PC-9 (cell line): ENCODE measurements at regions of chr19 and their contacts with region 1.

Region 1: GRCh38 chr19:15841875-15842569 is 26.6 kb upstream of the OR10H1 start:
- DNase-seq: no peak
- H3K4me3 ChIP-seq: no peak overlapping the region
- H3K27ac ChIP-seq: no peak overlapping the region
- H3K4me1 ChIP-seq: peaks cover 11% of the 10 kb centered on the region
- H3K27me3 ChIP-seq: no peaks in the 10 kb centered on the region
- CTCF ChIP-seq: peak; percentile 59

Region 2: DNA sequence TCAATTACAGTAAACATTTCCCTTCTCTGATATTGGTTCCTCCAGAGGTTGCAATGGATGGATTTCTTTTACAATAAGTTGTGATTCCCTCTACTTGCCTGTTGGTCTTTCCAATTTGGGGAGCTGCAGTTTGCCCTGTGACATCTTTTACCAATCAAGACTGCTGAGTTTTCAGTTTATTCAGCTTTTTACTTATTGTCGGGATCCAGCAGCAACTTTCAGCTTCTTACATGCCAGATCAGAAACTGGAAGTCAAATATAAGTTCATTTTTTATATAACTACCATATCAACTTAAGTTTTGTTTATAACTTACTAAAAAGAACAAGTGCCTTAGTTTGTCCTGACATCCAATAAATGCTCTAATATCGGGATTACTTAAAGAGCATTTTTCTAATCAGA is 93.8 kb before region 1 on chr19:
- CTCF ChIA-PET with region 1: no interaction called
- POLR2A ChIA-PET with region 1: no interaction called
- intact Hi-C with region 1: no loop called
- DNase-seq: no peak
- H3K4me3 ChIP-seq: no peak overlapping the region
- H3K27ac ChIP-seq: no peak overlapping the region
- H3K4me1 ChIP-seq: no peaks in the 10 kb centered on the region
- H3K27me3 ChIP-seq: peaks cover 64% of the 10 kb centered on the region
- CTCF ChIP-seq: no peak

Region 3: DNA sequence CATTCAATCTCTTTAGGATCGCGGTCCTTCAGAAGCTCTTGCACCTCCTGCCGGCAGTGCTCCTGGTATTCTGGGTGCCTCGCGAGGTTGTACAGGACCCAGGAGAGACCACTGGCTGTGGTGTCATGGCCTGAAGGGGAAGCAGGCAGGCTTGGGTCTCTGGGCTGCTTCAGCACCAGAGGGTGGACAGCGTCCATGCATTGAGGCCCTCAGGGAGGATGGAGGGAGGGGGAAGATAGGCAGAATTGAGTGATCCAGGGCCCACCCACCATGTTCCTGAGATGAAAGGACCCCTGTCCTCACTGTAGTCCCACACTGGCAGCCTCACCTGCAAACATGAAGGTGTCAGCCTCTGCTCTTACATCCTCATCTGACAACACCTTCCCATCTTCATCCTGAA is 72.4 kb before region 1 on chr19:
- CTCF ChIA-PET with region 1: no interaction called
- POLR2A ChIA-PET with region 1: no interaction called
- intact Hi-C with region 1: no loop called
- DNase-seq: peak in 1 of 2 experiments; percentile 4
- H3K4me3 ChIP-seq: no peak overlapping the region
- H3K27ac ChIP-seq: no peak overlapping the region
- H3K4me1 ChIP-seq: no peaks in the 10 kb centered on the region
- H3K27me3 ChIP-seq: peaks cover 54% of the 10 kb centered on the region
- CTCF ChIP-seq: no peak

Region 4: GRCh38 chr19:15934332-15935174 is 92.5 kb after region 1 on chr19 and contains the start of gene CYP4F11:
- CTCF ChIA-PET with region 1: no interaction called
- POLR2A ChIA-PET with region 1: interaction called, 15 read pairs
- intact Hi-C with region 1: loop called (anchors 10 kb)
- DNase-seq: peak; percentile 96 to 98
- H3K4me3 ChIP-seq: peak within 1 kb of the TSS; percentile 83
- H3K27ac ChIP-seq: peak within 1 kb of the TSS; percentile 96
- H3K4me1 ChIP-seq: peaks cover 14% of the 10 kb centered on the region
- H3K27me3 ChIP-seq: no peaks in the 10 kb centered on the region
- CTCF ChIP-seq: no peak
- total RNA-seq, gene CYP4F11: 152 and 187 TPM in 2 replicates